Heart right ventricle (tissue), 16 donors: ENCODE measurements at regions of chr22 and their contacts with region 1.

Region 1: GRCh38 chr22:22348127-22348814 is 103.7 kb downstream of the VPREB1 start:
- DNase-seq: no peak
- ATAC-seq: no peak
- H3K4me3 ChIP-seq: no peak overlapping the region
- H3K27ac ChIP-seq: no peak overlapping the region
- H3K4me1 ChIP-seq: peaks cover 0 to 11% (median 0%) of the 10 kb centered on the region in 9 donors
- H3K27me3 ChIP-seq: peaks cover 0 to 67% (median 47%) of the 10 kb centered on the region in 7 donors
- CTCF ChIP-seq: peak in 2 of 9 donors; percentile 11 to 18

Region 2: DNA sequence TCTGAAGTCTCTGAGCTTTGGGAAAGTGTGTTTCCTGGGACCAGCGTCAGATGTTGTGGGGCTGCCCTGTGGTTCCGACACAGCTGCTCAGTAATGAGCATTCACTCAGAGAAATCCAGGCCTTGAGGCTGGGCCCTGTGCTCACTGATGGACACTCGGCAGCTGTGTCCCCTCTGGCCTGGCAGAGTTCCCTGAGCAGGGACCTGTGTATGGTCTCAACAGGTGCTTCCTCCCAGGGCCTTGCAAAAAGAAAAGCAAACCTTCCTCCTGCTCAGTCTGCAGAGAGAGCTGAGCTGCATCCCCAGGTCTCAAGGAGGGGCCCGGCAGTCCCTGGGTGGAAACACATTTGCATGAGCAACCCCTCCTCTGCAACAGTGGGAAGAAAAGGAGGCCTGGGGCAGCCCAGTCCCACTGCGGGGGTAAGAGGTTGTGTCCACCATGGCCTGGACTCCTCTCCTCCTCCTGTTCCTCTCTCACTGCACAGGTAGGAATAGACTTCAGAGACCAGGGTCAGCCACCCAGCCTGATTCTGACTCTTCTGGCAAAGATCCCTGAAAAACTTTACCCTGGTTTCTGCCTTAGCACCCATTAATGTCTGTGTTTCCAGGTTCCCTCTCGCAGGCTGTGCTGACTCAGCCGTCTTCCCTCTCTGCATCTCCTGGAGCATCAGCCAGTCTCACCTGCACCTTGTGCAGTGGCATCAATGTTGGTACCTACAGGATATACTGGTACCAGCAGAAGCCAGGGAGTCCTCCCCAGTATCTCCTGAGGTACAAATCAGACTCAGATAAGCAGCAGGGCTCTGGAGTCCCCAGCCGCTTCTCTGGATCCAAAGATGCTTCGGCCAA is 27.5 kb after region 1 on chr22:
- intact Hi-C with region 1: loop called in 1 of 10 experiments (anchors 2 kb)
- DNase-seq: no peak
- ATAC-seq: peak in 2 of 8 donors; percentile 20 to 31
- H3K4me3 ChIP-seq: no peak overlapping the region
- H3K27ac ChIP-seq: no peak overlapping the region
- H3K4me1 ChIP-seq: peaks cover 0 to 17% (median 10%) of the 10 kb centered on the region in 9 donors
- H3K27me3 ChIP-seq: peaks cover 0 to 48% (median 14%) of the 10 kb centered on the region in 7 donors
- CTCF ChIP-seq: no peak

Region 3: DNA sequence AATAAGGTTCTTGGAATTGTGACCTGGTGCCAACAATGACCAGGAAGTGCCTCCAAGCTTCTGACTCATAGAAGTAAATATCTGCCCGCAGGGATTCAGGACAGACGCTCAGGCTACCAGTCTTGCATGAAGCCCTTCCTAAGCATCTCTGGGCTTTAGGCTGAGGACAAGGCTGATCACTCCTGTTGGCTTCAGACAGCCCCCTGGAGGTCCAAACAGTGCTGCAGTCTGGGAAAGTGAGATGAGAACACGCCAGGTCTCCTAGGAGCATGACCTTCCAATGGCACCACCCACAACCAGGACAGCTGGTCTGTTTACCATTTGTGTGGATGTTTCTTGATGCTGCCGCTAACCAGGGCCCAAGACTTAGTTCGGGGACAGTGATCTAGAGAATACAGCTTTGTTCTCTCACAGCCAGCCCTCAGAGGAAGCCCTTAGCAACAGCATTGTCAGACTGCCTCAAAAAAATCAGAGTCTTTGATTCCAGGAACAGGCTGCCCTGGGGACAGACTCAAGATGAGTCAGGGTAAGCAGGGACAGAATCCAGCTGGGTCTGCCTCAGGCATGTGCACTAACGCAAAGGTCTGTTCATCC is 49.1 kb after region 1 on chr22:
- intact Hi-C with region 1: loop called in 4 of 10 experiments (anchors 1 to 5 kb)
- DNase-seq: peak in 1 of 2 donors; percentile 61
- ATAC-seq: peak; percentile 63 to 88 (median 84)
- H3K4me3 ChIP-seq: no peak overlapping the region
- H3K27ac ChIP-seq: peak overlapping the region in 5 of 10 donors; percentile 22 to 63 (median 50)
- H3K4me1 ChIP-seq: peaks cover 0 to 7% (median 4%) of the 10 kb centered on the region in 9 donors
- H3K27me3 ChIP-seq: peaks cover 0 to 15% (median 11%) of the 10 kb centered on the region in 7 donors
- CTCF ChIP-seq: peak in 3 of 9 donors; percentile 12 to 23 (median 16)

Region 4: DNA sequence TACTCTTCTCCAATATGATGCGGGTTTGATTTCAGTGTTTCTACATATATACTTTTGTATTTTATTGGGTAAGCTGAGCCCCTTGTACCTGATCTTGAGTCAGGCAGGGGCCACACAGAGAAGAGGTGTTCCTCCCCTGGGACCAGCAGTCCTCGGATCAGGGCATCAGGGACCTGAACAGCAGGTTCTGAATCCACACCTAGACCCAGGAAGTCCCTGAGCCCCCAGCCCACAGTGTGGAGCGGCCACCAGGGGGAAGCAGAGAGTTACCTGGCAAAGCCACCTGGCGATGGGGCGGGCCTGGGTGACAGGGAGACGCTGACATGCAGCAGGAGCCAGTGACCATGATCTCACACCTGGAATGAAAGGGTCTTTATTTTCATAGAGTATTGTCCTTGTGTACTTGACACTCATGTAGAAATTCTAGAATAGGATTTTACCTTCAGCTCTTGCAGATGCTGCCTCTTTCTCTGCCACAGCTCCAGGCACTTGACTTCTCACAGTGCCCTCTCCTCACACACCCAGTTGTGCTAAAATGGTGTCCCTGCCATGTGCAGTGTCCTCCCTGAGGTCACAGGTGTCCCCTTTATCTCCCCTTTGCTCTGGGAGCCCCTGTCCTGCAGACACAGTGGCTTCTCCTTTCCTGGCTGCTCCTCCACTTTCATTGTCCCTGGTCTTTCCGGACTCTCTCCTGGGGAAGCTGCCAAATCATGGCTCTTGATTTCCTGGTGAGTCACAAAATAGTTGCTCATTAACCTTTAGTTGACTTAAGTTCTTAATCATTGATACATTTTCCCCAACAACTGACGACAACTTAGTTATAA is 344.6 kb after region 1 on chr22:
- intact Hi-C with region 1: loop called in 1 of 10 experiments (anchors 5 kb)
- DNase-seq: peak in 1 of 2 donors; percentile 29
- ATAC-seq: no peak
- H3K4me3 ChIP-seq: no peak overlapping the region
- H3K27ac ChIP-seq: no peak overlapping the region
- H3K4me1 ChIP-seq: peaks cover 0 to 10% (median 0%) of the 10 kb centered on the region in 9 donors
- H3K27me3 ChIP-seq: peaks cover 0 to 11% (median 0%) of the 10 kb centered on the region in 7 donors
- CTCF ChIP-seq: peak in 6 of 9 donors; percentile 23 to 53 (median 39)